Caco-2 (cell line): ENCODE measurements at regions of chr6 and their contacts with region 1.

Region 1: DNA sequence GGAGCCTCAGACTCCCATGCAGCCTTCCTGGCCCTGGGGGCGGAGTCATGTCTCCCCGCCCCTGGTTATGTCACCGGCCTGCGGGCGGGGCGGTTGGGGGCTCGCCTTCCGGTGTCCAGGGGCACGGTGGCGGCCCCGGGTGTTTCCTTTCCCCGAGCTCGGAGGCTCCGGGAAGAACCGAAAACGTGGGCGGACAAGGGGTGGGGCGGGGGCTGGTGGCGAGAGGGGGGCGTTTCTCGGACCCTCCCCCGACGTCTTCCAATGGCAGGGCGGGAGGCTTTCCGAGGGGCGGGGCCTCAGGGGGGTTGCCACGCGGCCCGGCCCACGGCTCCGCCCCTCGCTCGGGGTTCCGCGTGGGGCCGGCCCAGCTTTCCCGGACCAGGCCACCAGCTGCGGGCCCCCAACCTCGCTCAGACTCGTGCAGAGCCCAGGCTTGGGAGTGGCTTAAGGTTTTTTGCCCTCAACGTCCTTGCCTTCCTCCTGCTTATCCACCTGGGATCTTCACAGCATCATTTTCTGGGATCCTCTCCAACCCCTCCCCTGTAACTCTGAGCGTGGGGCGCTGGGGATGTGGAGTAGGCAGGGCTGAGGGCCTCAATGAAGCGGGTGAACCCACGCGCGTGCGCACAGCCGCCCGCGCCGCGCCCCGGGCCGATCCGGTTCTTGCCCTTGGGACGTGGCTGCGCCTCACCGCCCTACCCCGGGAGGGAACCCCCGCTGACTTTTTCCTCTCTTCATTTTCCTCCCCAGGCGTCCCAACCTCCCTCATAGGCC is 2.1 kb upstream of the NRN1 start:
- DNase-seq: peak; percentile 75 to 76
- H3K4me3 ChIP-seq: peak overlapping the region; percentile 53
- H3K4me3 Mint-ChIP-seq: peak overlapping the region; percentile 72
- H3K27ac Mint-ChIP-seq: no peak overlapping the region
- H3K4me1 ChIP-seq: peaks cover 17% of the 10 kb centered on the region
- H3K4me1 Mint-ChIP-seq: no peaks in the 10 kb centered on the region
- H3K27me3 ChIP-seq: no peaks in the 10 kb centered on the region; the same call in 1 of the 2 replicates
- H3K27me3 Mint-ChIP-seq: peaks cover 38% of the 10 kb centered on the region
- CTCF ChIP-seq: no peak

Region 2: GRCh38 chr6:5471044-5471443 is 537.8 kb before region 1 on chr6:
- CTCF ChIA-PET with region 1: interaction called, 5 read pairs
- POLR2A ChIA-PET with region 1: no interaction called
- intact Hi-C with region 1: loop called (anchors 5 kb)
- DNase-seq: peak in 1 of 2 experiments; percentile 50
- H3K4me3 ChIP-seq: no peak overlapping the region
- H3K4me3 Mint-ChIP-seq: no peak overlapping the region
- H3K27ac Mint-ChIP-seq: no peak overlapping the region
- H3K4me1 ChIP-seq: no peaks in the 10 kb centered on the region
- H3K4me1 Mint-ChIP-seq: no peaks in the 10 kb centered on the region
- H3K27me3 ChIP-seq: no peaks in the 10 kb centered on the region
- H3K27me3 Mint-ChIP-seq: no peaks in the 10 kb centered on the region
- CTCF ChIP-seq: peak; percentile 60 to 88

Region 3: DNA sequence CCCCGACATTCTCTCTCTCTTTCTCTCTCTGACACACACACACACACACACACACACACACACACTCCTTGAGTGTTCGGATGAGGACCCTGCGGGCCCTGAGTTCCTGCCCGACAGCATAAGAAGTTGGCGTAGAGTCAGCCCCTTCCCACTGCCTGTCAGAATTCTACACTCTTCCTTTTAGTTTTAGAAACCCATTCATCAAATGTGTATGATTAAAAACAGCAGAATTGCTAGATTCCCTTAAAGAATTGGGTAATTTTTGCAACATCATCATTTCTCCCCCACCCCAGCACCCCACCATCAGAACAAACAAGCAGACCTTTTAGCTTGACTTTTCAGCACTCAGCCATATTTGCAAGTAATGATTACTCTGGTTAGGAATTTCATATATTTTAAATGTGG is 424.8 kb before region 1 on chr6:
- CTCF ChIA-PET with region 1: no interaction called
- POLR2A ChIA-PET with region 1: no interaction called
- intact Hi-C with region 1: loop called (anchors 5 kb)
- DNase-seq: no peak
- H3K4me3 ChIP-seq: no peak overlapping the region
- H3K4me3 Mint-ChIP-seq: no peak overlapping the region
- H3K27ac Mint-ChIP-seq: no peak overlapping the region
- H3K4me1 ChIP-seq: no peaks in the 10 kb centered on the region
- H3K4me1 Mint-ChIP-seq: no peaks in the 10 kb centered on the region
- H3K27me3 ChIP-seq: no peaks in the 10 kb centered on the region
- H3K27me3 Mint-ChIP-seq: no peaks in the 10 kb centered on the region
- CTCF ChIP-seq: no peak

Region 4: GRCh38 chr6:6057424-6058053 is 48.7 kb after region 1 on chr6:
- CTCF ChIA-PET with region 1: no interaction called
- POLR2A ChIA-PET with region 1: no interaction called
- intact Hi-C with region 1: no loop called
- DNase-seq: peak in 1 of 2 experiments; percentile 35
- H3K4me3 ChIP-seq: no peak overlapping the region
- H3K4me3 Mint-ChIP-seq: no peak overlapping the region
- H3K27ac Mint-ChIP-seq: no peak overlapping the region
- H3K4me1 ChIP-seq: no peaks in the 10 kb centered on the region
- H3K4me1 Mint-ChIP-seq: no peaks in the 10 kb centered on the region
- H3K27me3 ChIP-seq: no peaks in the 10 kb centered on the region
- H3K27me3 Mint-ChIP-seq: peaks cover 21% of the 10 kb centered on the region
- CTCF ChIP-seq: peak; percentile 42 to 56